CD8-positive, alpha-beta T cell (primary cell): ENCODE measurements at regions of chr2 and their contacts with region 1.

Region 1: GRCh38 chr2:241702132-241703031 is 543 bp downstream of the ING5 start:
- DNase-seq: peak; percentile 79 to 94 (median 92)
- ATAC-seq: peak; percentile 82
- H3K4me3 ChIP-seq: peak overlapping the region; percentile 49 to 86
- H3K4me3 Mint-ChIP-seq: peak overlapping the region; percentile 85
- H3K27ac ChIP-seq: peak overlapping the region; percentile 63 to 71
- H3K27ac Mint-ChIP-seq: peak overlapping the region; percentile 82
- H3K4me1 ChIP-seq: peaks cover 11% of the 10 kb centered on the region
- H3K4me1 Mint-ChIP-seq: peaks cover 18% of the 10 kb centered on the region
- H3K27me3 ChIP-seq: no peaks in the 10 kb centered on the region
- H3K27me3 Mint-ChIP-seq: no peaks in the 10 kb centered on the region
- CTCF ChIP-seq: peak; percentile 79

Region 2: DNA sequence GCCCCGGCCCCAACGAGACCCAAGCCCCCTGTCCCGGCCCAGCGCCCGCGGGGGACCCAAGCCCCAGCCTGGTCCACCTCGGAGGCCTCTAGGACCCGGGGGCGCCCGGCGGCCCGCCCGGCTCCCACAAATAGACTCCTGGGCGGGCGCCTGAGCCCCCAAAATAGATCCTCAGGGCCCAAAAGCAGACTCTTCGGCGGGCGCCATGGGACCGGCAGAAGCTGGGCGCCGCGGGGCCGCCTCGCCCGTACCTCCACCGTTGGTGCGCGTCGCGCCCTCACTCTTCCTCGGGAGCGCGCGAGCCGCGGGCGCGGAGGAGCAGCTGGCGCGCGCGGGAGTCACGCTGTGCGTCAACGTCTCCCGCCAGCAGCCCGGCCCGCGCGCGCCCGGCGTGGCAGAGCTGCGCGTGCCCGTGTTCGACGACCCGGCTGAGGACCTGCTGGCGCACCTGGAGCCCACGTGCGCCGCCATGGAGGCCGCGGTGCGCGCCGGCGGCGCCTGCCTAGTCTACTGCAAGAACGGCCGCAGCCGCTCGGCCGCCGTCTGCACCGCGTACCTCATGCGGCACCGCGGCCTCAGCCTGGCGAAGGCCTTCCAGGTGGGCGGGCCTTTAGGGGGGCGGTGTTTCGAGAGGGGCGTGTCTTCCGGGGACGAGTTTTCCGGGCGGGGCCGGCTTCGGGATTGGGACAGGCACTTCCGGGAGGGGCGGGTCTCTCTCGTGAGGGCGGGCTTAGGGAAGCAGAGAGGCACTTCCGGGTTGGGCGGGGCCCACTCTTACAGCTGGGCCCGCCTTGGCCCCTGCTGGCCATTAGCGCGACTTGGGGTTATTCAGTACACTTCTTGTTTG is 1141.7 kb before region 1 on chr2:
- CTCF ChIA-PET with region 1: no interaction called
- POLR2A ChIA-PET with region 1: no interaction called
- intact Hi-C with region 1: loop called (anchors 5 to 10 kb)
- DNase-seq: peak; percentile 98 to 100 (median 100)
- ATAC-seq: peak; percentile 59
- H3K4me3 ChIP-seq: peak overlapping the region; percentile 74 to 76
- H3K4me3 Mint-ChIP-seq: peak overlapping the region; percentile 89
- H3K27ac ChIP-seq: peak overlapping the region; percentile 82 to 84
- H3K27ac Mint-ChIP-seq: peak overlapping the region; percentile 96
- H3K4me1 ChIP-seq: peaks cover 80% of the 10 kb centered on the region
- H3K4me1 Mint-ChIP-seq: peaks cover 71% of the 10 kb centered on the region
- H3K27me3 ChIP-seq: no peaks in the 10 kb centered on the region
- H3K27me3 Mint-ChIP-seq: no peaks in the 10 kb centered on the region
- CTCF ChIP-seq: no peak

Region 3: DNA sequence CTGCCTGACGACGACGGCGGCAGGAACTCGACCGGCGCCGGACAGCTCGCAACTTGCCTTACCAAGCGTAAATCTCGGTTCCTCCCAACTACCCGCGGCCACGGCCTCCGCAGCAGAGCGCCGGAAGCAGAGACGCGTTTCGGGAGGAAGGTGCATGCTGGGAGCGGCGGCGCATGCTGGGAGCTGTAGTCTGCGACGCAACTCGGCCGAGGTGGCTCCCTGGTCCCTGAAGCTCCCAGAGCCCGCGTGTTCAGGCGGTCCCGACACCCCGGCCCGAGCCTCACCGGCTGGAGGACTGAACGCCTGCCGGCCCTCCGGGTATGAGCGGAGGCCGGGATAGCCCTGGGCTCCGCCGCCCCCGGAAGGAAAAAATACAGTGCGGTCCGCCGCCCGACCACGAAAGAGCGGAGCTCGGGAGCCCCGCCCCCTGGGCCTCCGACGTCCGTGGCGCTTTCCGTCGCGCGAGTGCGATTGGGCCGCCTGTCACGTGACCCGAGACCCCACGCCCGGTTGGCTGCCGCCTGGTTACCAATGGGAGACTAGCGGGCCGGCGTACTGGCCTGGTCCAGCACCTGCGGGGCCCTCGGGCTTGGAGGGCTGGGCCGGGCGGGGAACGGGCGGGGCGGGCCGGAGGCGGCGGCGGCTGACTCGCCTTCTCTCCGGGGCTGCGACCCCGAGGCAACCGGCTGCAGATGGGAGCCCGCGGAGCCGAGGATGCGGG is 1116.0 kb before region 1 on chr2 and contains the start of gene CAPN10:
- CTCF ChIA-PET with region 1: no interaction called
- POLR2A ChIA-PET with region 1: no interaction called
- intact Hi-C with region 1: loop called in 1 of 2 experiments (anchors 5 kb)
- DNase-seq: peak; percentile 92 to 98 (median 97)
- ATAC-seq: peak; percentile 80
- H3K4me3 ChIP-seq: peak within 1 kb of the TSS; percentile 82 to 95
- H3K4me3 Mint-ChIP-seq: peak within 1 kb of the TSS; percentile 88
- H3K27ac ChIP-seq: peak within 1 kb of the TSS; percentile 86 to 90
- H3K27ac Mint-ChIP-seq: peak within 1 kb of the TSS; percentile 94
- H3K4me1 ChIP-seq: peaks cover 37% of the 10 kb centered on the region
- H3K4me1 Mint-ChIP-seq: peaks cover 57% of the 10 kb centered on the region
- H3K27me3 ChIP-seq: no peaks in the 10 kb centered on the region
- H3K27me3 Mint-ChIP-seq: no peaks in the 10 kb centered on the region
- CTCF ChIP-seq: no peak
- total RNA-seq, gene CAPN10: 65.9 to 68.9 TPM

Region 4: DNA sequence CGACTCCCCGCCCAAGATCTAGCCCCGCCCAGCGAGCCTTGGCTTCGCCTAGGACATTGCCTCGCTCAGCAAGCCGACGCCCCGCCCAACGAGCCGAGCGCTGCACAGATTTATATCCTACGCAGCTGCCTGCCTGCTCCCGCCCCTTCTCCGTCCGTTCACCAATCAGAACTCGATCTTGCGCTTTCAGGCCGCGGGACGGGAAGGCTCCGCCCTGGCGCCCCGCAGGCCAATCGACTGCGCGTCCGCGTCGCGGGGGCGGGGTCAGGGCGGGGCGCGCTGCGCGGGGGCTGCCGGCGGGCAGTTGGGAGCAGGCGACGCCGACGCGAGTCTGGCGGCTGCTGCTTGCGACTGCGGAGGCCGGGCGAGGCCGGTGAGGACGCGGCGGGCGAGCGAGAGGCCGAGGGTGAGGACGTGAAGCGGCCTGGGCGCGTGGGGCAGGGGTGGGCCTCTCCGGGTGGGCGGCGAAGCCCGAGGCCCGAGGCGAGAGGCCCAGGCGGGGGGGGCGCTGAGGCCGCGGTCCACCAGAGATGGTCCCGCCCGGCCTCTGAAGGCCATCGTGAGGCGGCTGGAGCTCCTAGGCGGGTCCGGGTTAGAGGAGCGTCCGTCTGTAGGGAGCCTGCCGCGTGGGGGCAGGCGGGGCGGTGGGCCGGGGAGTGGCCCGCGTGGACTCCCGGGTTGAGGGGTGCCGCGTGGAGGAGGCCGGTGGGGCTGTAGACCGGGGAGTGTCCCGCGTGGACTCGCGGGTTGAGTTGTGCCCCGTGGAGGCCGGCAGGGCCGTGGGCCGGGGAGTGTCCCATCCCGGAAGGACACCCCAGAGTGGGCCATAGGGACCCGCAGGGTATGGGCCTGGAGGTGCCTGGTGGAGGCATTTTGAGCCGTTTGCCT is 346.2 kb before region 1 on chr2 and contains the start of gene FARP2:
- CTCF ChIA-PET with region 1: no interaction called
- POLR2A ChIA-PET with region 1: no interaction called
- intact Hi-C with region 1: loop called in 1 of 2 experiments (anchors 1 kb)
- DNase-seq: peak; percentile 94 to 99 (median 97)
- ATAC-seq: peak; percentile 94
- H3K4me3 ChIP-seq: peak within 1 kb of the TSS; percentile 55 to 58
- H3K4me3 Mint-ChIP-seq: peak within 1 kb of the TSS; percentile 86
- H3K27ac ChIP-seq: peak within 1 kb of the TSS; percentile 23 to 52
- H3K27ac Mint-ChIP-seq: peak within 1 kb of the TSS; percentile 87
- H3K4me1 ChIP-seq: peaks cover 10% of the 10 kb centered on the region
- H3K4me1 Mint-ChIP-seq: peaks cover 21% of the 10 kb centered on the region
- H3K27me3 ChIP-seq: no peaks in the 10 kb centered on the region
- H3K27me3 Mint-ChIP-seq: no peaks in the 10 kb centered on the region
- CTCF ChIP-seq: no peak
- total RNA-seq, gene FARP2: 20.6 to 22.5 TPM

Region 5: DNA sequence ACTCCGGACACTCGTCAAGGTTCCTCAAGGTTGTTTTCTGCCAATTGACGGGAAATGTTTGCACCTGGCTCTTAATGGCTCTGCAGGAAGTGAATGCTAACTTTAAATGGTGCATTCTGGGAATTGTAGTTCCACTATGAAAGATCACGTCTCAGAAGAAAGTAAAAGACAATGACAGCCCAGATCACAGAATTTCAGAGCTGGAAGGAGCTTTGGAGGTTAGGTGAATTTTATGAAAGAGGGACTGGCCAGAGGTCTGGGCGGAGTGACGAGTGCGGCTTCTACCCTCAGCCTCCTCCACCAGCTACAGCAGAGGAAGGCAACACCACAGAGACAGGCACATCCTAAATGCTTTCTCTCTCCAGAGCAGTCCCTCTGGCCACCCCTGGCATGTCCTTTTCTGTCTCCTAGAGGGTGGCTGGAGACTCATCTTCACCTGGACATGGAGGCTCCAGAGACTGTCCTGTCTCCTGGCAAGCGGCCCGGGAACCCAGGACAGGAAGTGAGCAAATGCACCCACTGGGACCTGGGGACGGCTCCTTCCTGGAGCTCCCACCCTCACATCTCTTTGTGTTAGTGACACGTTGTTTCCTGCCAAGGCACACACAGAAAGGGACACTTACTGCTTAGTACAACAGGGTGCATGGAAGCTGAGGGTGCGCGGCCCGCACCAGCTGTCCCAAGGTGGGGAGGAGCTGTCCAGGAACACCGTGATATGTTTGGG is 84.8 kb before region 1 on chr2:
- CTCF ChIA-PET with region 1: no interaction called
- POLR2A ChIA-PET with region 1: no interaction called
- intact Hi-C with region 1: loop called in 1 of 2 experiments (anchors 5 kb)
- DNase-seq: peak in 6 of 9 experiments; percentile 11 to 80 (median 46)
- ATAC-seq: peak; percentile 86
- H3K4me3 ChIP-seq: peak overlapping the region; percentile 55 to 73
- H3K4me3 Mint-ChIP-seq: peak overlapping the region; percentile 89
- H3K27ac ChIP-seq: peak overlapping the region; percentile 61 to 70
- H3K27ac Mint-ChIP-seq: peak overlapping the region; percentile 88
- H3K4me1 ChIP-seq: peaks cover 15% of the 10 kb centered on the region
- H3K4me1 Mint-ChIP-seq: peaks cover 31% of the 10 kb centered on the region
- H3K27me3 ChIP-seq: no peaks in the 10 kb centered on the region
- H3K27me3 Mint-ChIP-seq: no peaks in the 10 kb centered on the region
- CTCF ChIP-seq: no peak

Region 6: DNA sequence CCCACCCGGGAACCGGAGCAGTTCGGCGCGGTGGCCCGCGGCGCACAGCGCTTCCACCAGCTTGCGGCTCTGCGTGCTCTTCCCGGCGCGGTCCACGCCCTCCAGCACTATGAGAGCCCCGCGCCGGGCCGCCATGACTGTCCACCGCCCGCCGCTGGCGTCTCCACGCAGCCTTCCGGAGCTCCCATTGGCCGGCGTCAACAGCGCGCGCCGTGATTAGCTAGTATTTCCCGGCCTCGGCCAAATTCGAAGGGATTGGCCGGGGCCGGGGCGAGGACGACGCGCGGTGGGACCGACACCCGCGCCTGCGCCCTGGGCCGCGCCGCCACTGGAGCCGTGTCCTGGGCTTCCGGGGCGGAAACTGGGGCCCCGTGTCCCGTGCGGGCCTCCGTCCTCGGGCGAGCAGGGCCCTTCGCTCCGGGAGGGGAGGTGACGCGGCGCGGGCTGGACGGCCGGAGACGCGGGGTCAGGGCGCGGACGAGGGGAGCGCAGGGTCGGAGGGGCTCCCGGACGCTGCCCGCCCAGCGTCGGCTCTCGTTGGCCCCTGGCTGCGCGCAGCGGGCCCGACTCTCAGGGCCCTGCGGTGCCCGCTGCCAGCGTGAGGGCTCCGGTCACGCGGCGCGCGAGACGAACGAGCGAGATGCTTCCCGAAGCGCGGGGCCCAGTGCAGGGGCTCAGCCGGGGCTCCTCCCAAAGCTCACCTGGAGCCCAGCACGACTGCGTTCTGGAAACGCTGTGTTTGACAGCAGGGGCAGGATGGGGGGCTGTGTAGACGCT is 15.5 kb before region 1 on chr2 and contains the start of gene DTYMK:
- CTCF ChIA-PET with region 1: interaction called, 32 read pairs
- POLR2A ChIA-PET with region 1: interaction called, 70 read pairs
- intact Hi-C with region 1: loop called (anchors 1 kb)
- DNase-seq: peak; percentile 89 to 98 (median 95)
- ATAC-seq: peak; percentile 95
- H3K4me3 ChIP-seq: peak within 1 kb of the TSS; percentile 87 to 98
- H3K4me3 Mint-ChIP-seq: peak within 1 kb of the TSS; percentile 90
- H3K27ac ChIP-seq: peak within 1 kb of the TSS; percentile 74 to 81
- H3K27ac Mint-ChIP-seq: peak within 1 kb of the TSS; percentile 91
- H3K4me1 ChIP-seq: peaks cover 21% of the 10 kb centered on the region
- H3K4me1 Mint-ChIP-seq: peaks cover 24% of the 10 kb centered on the region
- H3K27me3 ChIP-seq: no peaks in the 10 kb centered on the region
- H3K27me3 Mint-ChIP-seq: no peaks in the 10 kb centered on the region
- CTCF ChIP-seq: no peak
- total RNA-seq, gene DTYMK: 3.7 to 6.0 TPM

Region 7: GRCh38 chr2:241762933-241763369 is 60.6 kb after region 1 on chr2:
- CTCF ChIA-PET with region 1: no interaction called
- POLR2A ChIA-PET with region 1: no interaction called
- intact Hi-C with region 1: loop called in 1 of 2 experiments (anchors 2 kb)
- DNase-seq: peak; percentile 44 to 95 (median 71)
- ATAC-seq: peak; percentile 77
- H3K4me3 ChIP-seq: peak overlapping the region in 1 of 2 experiments; percentile 33
- H3K4me3 Mint-ChIP-seq: peak overlapping the region; percentile 68
- H3K27ac ChIP-seq: peak overlapping the region; percentile 66 to 75
- H3K27ac Mint-ChIP-seq: peak overlapping the region; percentile 96
- H3K4me1 ChIP-seq: peaks cover 15% of the 10 kb centered on the region
- H3K4me1 Mint-ChIP-seq: peaks cover 27% of the 10 kb centered on the region
- H3K27me3 ChIP-seq: no peaks in the 10 kb centered on the region
- H3K27me3 Mint-ChIP-seq: no peaks in the 10 kb centered on the region
- CTCF ChIP-seq: no peak